CD4-positive, alpha-beta T cell (primary cell): ENCODE measurements at regions of chrX and their contacts with region 1.

Region 1: DNA sequence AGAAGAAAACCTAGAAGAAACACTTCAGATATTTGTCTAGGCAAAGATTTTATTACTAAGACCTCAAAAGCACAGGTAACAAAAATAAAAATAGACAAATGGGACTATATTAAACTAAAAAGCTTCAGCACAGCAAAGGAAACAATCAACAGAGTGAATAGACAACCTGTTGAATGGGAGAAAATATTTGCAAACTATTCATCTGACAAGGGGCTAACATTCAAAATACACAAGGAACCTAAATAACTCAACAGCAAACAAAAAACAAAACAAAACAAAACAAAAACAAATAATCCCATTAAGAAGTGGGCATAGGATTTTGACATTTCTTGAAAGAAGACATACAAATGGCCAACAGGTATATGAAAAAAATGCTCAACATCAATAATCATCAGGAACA is 192.7 kb upstream of the ZCCHC13 start:
- DNase-seq: no peak
- ATAC-seq: no peak
- H3K4me3 ChIP-seq: no peak overlapping the region
- H3K4me3 Mint-ChIP-seq: no peak overlapping the region
- H3K27ac ChIP-seq: no peak overlapping the region
- H3K27ac Mint-ChIP-seq: no peak overlapping the region
- H3K4me1 ChIP-seq: no peaks in the 10 kb centered on the region
- H3K4me1 Mint-ChIP-seq: no peaks in the 10 kb centered on the region
- H3K27me3 ChIP-seq: no peaks in the 10 kb centered on the region
- H3K27me3 Mint-ChIP-seq: no peaks in the 10 kb centered on the region
- CTCF ChIP-seq: no peak

Region 2: GRCh38 chrX:73841337-73841736 is 269.9 kb before region 1 on chrX:
- CTCF ChIA-PET with region 1: no interaction called
- POLR2A ChIA-PET with region 1: no interaction called
- intact Hi-C with region 1: no loop called
- DNase-seq: no peak
- ATAC-seq: no peak
- H3K4me3 ChIP-seq: no peak overlapping the region
- H3K4me3 Mint-ChIP-seq: no peak overlapping the region
- H3K27ac ChIP-seq: no peak overlapping the region
- H3K27ac Mint-ChIP-seq: no peak overlapping the region
- H3K4me1 ChIP-seq: no peaks in the 10 kb centered on the region
- H3K4me1 Mint-ChIP-seq: no peaks in the 10 kb centered on the region
- H3K27me3 ChIP-seq: no peaks in the 10 kb centered on the region
- H3K27me3 Mint-ChIP-seq: peaks cover 5% of the 10 kb centered on the region
- CTCF ChIP-seq: no peak

Region 3: DNA sequence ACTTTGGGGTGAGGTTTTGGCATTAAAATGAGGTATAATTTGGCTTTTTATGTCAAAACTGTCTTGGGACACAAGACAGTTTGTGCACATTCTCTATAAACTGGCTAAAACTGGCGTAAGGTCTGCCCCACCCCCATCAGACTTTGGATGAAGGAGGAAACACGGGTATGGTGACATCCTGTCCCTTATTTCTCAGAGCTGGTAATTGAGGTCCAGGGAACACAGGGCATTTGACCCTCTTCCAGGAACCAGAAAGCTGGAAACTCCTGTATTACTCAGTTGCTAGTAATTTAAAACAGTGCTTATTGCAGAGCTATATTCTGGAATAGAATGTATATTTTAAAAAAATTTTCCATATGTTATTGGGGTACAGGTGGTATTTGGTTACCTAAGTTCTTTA is 388.8 kb after region 1 on chrX:
- CTCF ChIA-PET with region 1: no interaction called
- POLR2A ChIA-PET with region 1: no interaction called
- intact Hi-C with region 1: loop called in 1 of 2 experiments (anchors 5 kb)
- DNase-seq: no peak
- ATAC-seq: no peak
- H3K4me3 ChIP-seq: no peak overlapping the region
- H3K4me3 Mint-ChIP-seq: no peak overlapping the region
- H3K27ac ChIP-seq: no peak overlapping the region
- H3K27ac Mint-ChIP-seq: no peak overlapping the region
- H3K4me1 ChIP-seq: no peaks in the 10 kb centered on the region
- H3K4me1 Mint-ChIP-seq: no peaks in the 10 kb centered on the region
- H3K27me3 ChIP-seq: no peaks in the 10 kb centered on the region
- H3K27me3 Mint-ChIP-seq: no peaks in the 10 kb centered on the region
- CTCF ChIP-seq: no peak